ENCODE measurements at regions of chr19 and their contacts with region 1.

Region 1: GRCh38 chr19:46392243-46392801 is 21.0 kb downstream of the CCDC8 start:
- DNase-seq: no peak
- ATAC-seq: no peak
- H3K4me3 Mint-ChIP-seq: no peak overlapping the region
- H3K27ac Mint-ChIP-seq: no peak overlapping the region
- H3K4me1 Mint-ChIP-seq: peaks cover 3% of the 10 kb centered on the region
- H3K27me3 Mint-ChIP-seq: no peaks in the 10 kb centered on the region
- CTCF ChIP-seq: no peak

Region 2: GRCh38 chr19:46283771-46284170 is 108.6 kb before region 1 on chr19:
- CTCF ChIA-PET with region 1: no interaction called
- POLR2A ChIA-PET with region 1: no interaction called
- intact Hi-C with region 1: loop called (anchors 2 kb)
- DNase-seq: no peak
- ATAC-seq: no peak
- H3K4me3 Mint-ChIP-seq: no peak overlapping the region
- H3K27ac Mint-ChIP-seq: no peak overlapping the region
- H3K4me1 Mint-ChIP-seq: no peaks in the 10 kb centered on the region
- H3K27me3 Mint-ChIP-seq: peaks cover 6% of the 10 kb centered on the region
- CTCF ChIP-seq: no peak

Region 3: DNA sequence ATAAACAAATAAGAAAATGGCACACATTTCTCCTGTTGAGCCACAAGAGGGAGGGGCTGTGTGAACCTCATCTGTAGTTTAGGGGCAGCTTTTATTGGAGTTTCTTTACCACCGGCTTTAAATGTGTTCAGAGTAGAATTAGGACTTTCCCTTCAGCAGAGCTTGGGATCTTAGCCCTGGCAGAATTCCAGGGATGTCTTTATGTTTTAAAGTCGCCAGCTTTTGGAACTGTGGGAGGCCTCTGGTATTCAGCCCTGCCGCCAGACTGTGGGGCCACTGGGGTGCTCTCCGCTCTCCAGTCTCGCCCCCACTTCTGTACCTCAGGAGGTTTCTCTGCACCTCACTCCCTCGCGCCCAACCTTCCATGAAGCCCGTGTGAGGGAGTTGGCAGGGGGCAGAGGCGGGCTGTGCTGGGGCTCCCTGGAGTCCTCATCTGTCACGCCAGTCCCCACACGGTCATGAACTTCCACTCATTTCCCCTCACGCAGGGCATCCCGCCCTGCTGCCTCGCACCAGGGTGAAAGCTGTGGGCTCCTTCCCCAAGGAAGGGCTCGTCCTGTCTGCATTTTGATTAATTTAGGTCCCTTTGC is 10.5 kb before region 1 on chr19:
- CTCF ChIA-PET with region 1: no interaction called
- POLR2A ChIA-PET with region 1: interaction called, 15 read pairs
- intact Hi-C with region 1: no loop called
- DNase-seq: no peak
- ATAC-seq: no peak
- H3K4me3 Mint-ChIP-seq: no peak overlapping the region
- H3K27ac Mint-ChIP-seq: no peak overlapping the region
- H3K4me1 Mint-ChIP-seq: peaks cover 3% of the 10 kb centered on the region
- H3K27me3 Mint-ChIP-seq: no peaks in the 10 kb centered on the region
- CTCF ChIP-seq: no peak

Region 4: DNA sequence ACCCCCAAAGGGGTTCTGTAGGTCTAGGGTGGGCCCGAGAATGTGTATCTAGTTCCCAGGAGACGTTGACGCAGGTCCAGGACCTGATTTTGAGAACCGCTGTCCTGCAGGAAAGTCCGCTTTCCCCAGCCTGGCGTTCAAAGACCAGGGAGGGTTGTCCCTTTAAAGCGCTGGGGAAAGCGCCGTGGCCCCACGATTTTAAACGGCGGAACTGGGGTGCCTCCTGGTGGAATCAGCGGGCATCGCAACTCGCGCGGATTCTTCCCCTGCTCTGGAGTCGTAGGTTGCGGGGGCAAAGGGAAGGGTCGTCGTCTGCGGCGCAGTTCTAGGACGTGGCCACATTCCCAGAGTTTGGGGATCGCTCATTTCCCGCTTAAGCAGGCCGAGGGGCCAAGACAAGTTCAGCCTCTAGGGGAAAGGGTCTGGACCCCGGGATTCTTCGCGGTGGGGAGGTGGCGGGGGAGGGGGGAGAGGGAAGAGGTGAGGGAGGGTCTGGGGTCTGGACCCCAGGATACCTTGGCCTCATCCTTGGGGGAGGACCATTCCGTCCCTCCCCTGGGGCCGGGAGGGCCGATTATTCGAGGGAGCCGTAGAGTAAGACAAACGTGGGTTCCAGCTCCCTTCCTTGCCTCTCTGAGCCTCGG is 95.6 kb after region 1 on chr19:
- CTCF ChIA-PET with region 1: interaction called, 9 read pairs
- POLR2A ChIA-PET with region 1: interaction called, 9 read pairs
- intact Hi-C with region 1: loop called (anchors 1 kb)
- DNase-seq: peak; percentile 69
- ATAC-seq: peak; percentile 69
- H3K4me3 Mint-ChIP-seq: no peak overlapping the region
- H3K27ac Mint-ChIP-seq: no peak overlapping the region
- H3K4me1 Mint-ChIP-seq: peaks cover 24% of the 10 kb centered on the region
- H3K27me3 Mint-ChIP-seq: peaks cover 73% of the 10 kb centered on the region
- CTCF ChIP-seq: peak; percentile 32

Region 5: GRCh38 chr19:46513461-46514236 is 121.3 kb after region 1 on chr19:
- CTCF ChIA-PET with region 1: interaction called, 3 read pairs
- POLR2A ChIA-PET with region 1: no interaction called
- intact Hi-C with region 1: loop called (anchors 1 kb)
- DNase-seq: peak; percentile 74
- ATAC-seq: peak; percentile 57
- H3K4me3 Mint-ChIP-seq: no peak overlapping the region
- H3K27ac Mint-ChIP-seq: no peak overlapping the region
- H3K4me1 Mint-ChIP-seq: no peaks in the 10 kb centered on the region
- H3K27me3 Mint-ChIP-seq: peaks cover 24% of the 10 kb centered on the region
- CTCF ChIP-seq: no peak

Region 6: GRCh38 chr19:46542428-46543230 is 150.3 kb after region 1 on chr19:
- CTCF ChIA-PET with region 1: no interaction called
- POLR2A ChIA-PET with region 1: no interaction called
- intact Hi-C with region 1: loop called (anchors 1 kb)
- DNase-seq: peak; percentile 49
- ATAC-seq: peak; percentile 40
- H3K4me3 Mint-ChIP-seq: no peak overlapping the region
- H3K27ac Mint-ChIP-seq: no peak overlapping the region
- H3K4me1 Mint-ChIP-seq: peaks cover 6% of the 10 kb centered on the region
- H3K27me3 Mint-ChIP-seq: peaks cover 5% of the 10 kb centered on the region
- CTCF ChIP-seq: peak; percentile 59

Measured in activated B cell treated with CpG ODN at 0.5 μM for 24 hours (primary cell).